Aorta (tissue), 5 donors: ENCODE measurements at regions of chr22 and their contacts with region 1.

Region 1: GRCh38 chr22:43955040-43955882 is at the start of gene SAMM50:
- DNase-seq: peak; percentile 96 to 97
- ATAC-seq: peak; percentile 97
- H3K4me3 ChIP-seq: peak within 1 kb of the TSS; percentile 30 to 70
- H3K27ac ChIP-seq: peak within 1 kb of the TSS in 1 of 2 donors; percentile 7
- H3K4me1 ChIP-seq: peaks cover 0 to 3% of the 10 kb centered on the region in 2 donors
- H3K27me3 ChIP-seq: no peaks in the 10 kb centered on the region
- total RNA-seq, gene SAMM50: 20.9 to 29.5 TPM

Region 2: GRCh38 chr22:43625242-43625641 is 330.0 kb before region 1 on chr22:
- intact Hi-C with region 1: no loop called
- DNase-seq: no peak
- ATAC-seq: no peak
- H3K4me3 ChIP-seq: no peak overlapping the region
- H3K27ac ChIP-seq: no peak overlapping the region
- H3K4me1 ChIP-seq: no peaks in the 10 kb centered on the region
- H3K27me3 ChIP-seq: no peaks in the 10 kb centered on the region

Region 3: DNA sequence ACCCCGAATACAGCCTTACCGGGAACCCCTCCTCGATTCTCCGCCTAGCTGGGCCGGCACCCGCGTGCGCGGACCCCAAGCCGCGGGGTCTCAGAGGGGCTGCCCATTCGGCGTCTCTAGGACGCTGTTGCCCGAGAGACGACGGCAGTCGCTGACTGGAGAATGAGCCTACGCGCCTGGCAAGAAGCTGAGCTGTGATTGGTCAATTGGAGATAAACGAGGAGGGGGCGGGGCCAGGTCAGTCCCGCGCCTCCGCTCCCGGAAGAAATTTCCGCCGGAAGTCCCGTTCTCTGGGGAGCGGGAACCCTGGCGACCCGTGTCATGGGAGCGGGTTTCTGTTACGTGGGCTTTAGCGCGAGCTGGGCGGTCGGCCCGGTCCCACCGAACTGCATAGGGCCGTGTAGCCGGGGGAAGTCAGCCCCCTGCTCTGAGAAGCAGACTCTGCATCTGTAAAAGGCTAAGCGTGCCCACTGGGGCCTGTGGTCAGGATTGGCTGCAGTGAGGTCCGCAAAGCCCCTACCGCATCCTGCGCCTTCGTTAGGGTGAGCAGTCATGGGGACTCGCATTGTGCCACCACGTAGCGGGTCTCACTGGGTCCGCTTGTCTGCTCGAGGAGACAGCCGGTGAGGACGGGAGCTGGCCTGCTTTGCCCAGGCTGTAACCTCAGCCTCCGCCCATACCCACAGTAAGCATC is 143.0 kb before region 1 on chr22 and contains the start of gene EFCAB6:
- intact Hi-C with region 1: loop called in 1 of 2 experiments (anchors 10 kb)
- DNase-seq: peak; percentile 95 to 96
- ATAC-seq: peak; percentile 97
- H3K4me3 ChIP-seq: peak within 1 kb of the TSS; percentile 63 to 88
- H3K27ac ChIP-seq: peak within 1 kb of the TSS in 1 of 2 donors; percentile 47
- H3K4me1 ChIP-seq: peaks cover 0 to 1% of the 10 kb centered on the region in 2 donors
- H3K27me3 ChIP-seq: no peaks in the 10 kb centered on the region
- total RNA-seq, gene EFCAB6: 1.5 to 2.6 TPM

Region 4: GRCh38 chr22:44012162-44012561 is 56.9 kb after region 1 on chr22:
- intact Hi-C with region 1: loop called in 1 of 2 experiments (anchors 10 kb)
- DNase-seq: no peak
- ATAC-seq: no peak
- H3K4me3 ChIP-seq: no peak overlapping the region
- H3K27ac ChIP-seq: no peak overlapping the region
- H3K4me1 ChIP-seq: no peaks in the 10 kb centered on the region
- H3K27me3 ChIP-seq: no peaks in the 10 kb centered on the region